Activated CD8-positive, alpha-beta memory T cell treated with anti-CD3 and anti-CD28 coated beads, Interleukin-2, amount 10 ng/mL, durations not matched to agents 7 days and 5 days (primary cell): ENCODE measurements at regions of chr15 and their contacts with region 1.

Region 1: DNA sequence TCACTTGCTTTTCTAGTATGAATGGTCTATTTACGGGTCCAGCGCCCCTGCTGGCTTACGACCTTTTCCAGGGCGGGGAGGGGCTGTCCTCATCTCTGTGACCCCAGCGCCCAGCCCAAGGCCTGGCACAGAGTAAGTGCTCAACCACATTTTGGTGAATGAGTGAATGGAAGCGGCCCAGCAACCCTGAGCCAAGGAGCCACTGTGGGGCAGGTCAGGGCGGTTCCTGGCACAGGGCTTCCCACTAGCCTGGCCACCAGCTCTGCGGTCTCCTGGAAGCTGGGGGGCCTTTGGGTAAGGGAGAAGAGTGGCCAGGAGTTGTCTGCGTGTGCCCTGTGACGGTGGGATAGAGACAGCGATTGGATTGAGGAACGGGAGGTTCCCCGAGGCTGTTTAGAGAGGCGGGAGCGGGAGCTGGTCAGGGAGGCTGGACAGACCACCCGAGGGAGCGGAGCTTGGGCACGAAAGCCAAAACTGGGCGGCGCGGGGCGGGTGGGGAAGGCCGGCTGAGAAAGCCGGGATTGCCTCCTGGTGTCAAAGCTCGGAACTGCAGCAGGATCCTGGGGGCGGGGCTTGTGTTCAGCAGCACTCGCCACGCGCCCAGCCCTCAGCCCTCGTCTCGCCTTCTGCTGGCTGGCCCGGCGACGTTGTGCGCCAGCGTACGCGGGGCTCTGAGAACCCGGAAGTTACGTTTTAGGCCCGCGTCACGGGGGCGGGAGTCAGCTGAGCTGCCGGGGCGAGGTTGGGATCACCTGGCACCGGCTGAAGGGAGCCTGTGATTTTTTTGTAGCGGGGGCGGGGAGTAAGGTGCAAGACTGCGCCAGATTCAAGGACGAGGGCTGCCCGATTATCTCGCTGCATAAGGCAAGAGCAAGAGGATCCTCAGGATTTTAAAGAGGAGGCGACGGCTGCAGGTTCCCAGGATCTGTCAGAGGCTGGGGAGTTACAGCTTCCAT is at the start of gene VPS18:
- DNase-seq: peak; percentile 99
- ATAC-seq: peak; percentile 98
- H3K4me3 Mint-ChIP-seq: peak within 1 kb of the TSS; percentile 98
- H3K27ac Mint-ChIP-seq: peak within 1 kb of the TSS; percentile 94
- H3K4me1 Mint-ChIP-seq: peaks cover 32% of the 10 kb centered on the region
- H3K27me3 Mint-ChIP-seq: no peaks in the 10 kb centered on the region
- total RNA-seq, gene VPS18: 16.9 to 19.5 TPM

Region 2: GRCh38 chr15:40770147-40770721 is 123.8 kb before region 1 on chr15:
- CTCF ChIA-PET with region 1: no interaction called
- DNase-seq: no peak
- ATAC-seq: no peak
- H3K4me3 Mint-ChIP-seq: no peak overlapping the region
- H3K27ac Mint-ChIP-seq: peak overlapping the region; percentile 63
- H3K4me1 Mint-ChIP-seq: peaks cover 34% of the 10 kb centered on the region
- H3K27me3 Mint-ChIP-seq: no peaks in the 10 kb centered on the region

Region 3: DNA sequence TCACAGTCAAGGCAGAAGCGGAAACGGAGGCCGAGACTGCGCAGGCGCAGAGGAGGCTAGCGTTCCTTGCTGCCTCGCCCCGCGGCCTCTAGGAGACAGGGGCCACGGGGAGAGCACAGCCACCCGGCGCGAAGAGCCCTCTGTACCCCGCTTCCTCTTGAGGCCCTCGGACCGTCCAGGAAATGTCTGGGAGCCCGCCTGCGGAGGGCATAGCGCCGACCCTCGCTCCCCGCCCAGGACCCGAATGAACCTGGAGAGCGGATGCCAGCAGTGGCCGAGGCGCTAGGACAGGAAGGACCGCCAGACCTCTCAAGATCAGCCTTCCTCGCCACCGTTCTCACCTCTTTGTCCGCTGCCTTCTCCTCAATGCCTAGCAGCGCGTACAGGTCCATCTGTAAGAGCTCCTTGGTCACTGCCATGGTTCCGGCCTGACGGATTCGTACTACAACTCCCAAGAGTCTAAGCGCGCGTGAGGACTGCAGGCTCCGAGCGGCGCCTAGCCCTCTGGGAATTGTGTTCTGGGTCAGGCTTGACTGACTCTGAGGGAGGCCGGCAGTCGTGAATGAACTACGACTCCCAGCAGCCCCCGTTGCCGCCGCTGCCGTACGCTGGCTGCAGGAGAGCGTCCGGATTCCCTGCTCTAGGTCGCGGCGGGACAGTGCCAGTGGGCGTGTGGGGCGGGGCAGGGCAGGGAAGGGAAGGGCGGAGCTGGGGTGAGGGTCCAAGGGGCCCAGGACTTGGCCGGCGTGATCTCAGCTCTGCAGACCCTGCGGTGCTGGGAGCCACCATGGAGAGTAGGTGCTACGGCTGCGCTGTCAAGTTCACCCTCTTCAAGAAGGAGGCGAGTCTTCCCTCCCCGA is 86.8 kb before region 1 on chr15 and contains the starts of genes DNAJC17 and ZFYVE19:
- CTCF ChIA-PET with region 1: interaction called, 16 read pairs
- DNase-seq: peak; percentile 98
- ATAC-seq: peak; percentile 98
- H3K4me3 Mint-ChIP-seq: peak within 1 kb of the TSS; percentile 84
- H3K27ac Mint-ChIP-seq: peak within 1 kb of the TSS; percentile 93
- H3K4me1 Mint-ChIP-seq: peaks cover 26% of the 10 kb centered on the region
- H3K27me3 Mint-ChIP-seq: no peaks in the 10 kb centered on the region
- total RNA-seq, gene DNAJC17: 45.6 to 51.2 TPM
- total RNA-seq, gene ZFYVE19: 28.2 TPM

Region 4: DNA sequence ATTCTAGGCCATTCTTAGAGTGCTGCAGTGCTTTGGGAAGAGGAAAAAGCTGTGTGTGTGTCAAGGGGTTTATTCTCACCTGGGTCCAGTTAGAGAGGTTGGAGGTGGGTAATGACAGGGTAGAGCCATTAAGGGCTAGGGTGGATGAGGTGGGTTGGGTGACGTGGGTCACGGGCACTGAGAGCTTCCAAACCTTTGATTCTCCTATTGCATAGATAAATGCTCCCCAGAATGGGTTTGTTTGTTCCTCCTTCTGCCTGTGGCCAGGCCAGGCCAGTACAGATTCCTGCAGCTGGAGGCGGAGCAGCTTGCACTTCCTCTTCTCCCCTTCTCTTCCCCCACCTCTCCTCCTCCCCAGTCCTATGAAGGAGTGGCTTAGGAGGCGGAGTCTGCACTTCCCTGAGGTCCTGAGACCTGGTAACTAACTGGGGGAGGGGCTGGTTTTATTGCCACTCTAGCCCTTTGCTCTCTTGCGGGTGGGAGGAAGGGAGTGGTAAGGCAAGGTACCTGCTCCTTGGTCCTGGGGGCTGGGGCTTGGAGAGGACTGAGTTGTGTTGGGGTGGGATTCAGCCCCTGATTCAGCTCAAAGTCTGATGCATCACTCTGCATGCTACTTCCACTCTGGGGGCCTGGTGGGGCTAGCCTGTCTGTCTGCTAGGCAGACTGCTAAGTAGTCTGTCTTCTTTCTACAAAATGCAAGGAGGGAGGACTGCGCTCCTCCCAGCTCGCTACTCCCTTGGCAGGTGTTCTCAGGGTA is 46.6 kb before region 1 on chr15:
- CTCF ChIA-PET with region 1: interaction called, 11 read pairs
- DNase-seq: no peak
- ATAC-seq: no peak
- H3K4me3 Mint-ChIP-seq: no peak overlapping the region
- H3K27ac Mint-ChIP-seq: no peak overlapping the region
- H3K4me1 Mint-ChIP-seq: peaks cover 25% of the 10 kb centered on the region
- H3K27me3 Mint-ChIP-seq: peaks cover 16% of the 10 kb centered on the region

Region 5: DNA sequence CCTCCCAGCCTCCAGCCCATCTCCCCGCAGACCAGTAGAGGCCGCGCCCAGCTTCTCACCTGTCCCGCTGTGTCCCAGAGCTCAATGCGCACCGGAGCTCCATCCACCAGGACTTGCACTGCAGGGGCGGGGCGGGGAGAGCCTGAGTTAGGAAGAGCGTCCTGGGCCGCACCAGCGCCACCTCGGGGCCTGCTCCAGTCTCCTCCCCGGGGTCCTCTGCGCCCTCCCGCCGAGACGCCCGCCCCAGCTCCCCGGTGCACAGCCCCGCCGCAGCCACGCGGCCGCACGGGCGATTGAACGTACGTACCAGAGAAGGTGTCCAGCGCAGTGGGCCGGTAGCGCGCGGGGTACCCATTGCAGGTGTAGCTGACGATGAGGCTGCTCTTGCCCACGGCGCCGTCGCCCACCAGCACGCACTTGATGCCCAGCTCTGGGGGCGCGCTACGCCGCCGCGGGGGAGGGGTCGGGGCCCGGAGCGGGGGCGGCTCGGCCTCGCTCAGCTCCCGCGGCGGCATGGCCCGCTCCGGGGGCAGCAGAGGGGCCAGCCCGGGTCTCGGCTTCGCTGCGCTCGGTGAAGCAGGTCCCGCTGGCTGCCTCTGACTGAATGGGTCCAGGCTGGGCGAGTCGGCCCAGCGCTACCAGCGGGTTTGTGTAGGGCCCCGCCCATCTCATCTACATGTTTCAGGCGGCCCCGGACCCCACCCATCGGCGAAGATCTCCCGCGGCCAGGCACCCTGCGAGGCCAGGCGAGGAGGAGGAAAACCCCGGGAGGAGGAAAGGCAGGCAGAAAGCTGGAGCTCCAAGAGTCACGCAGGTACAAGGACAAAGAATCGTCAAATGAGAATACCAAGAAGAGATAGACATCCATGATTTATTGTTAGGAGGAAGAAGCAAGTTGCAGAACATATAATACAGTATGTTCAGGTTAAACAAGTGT is 20.1 kb before region 1 on chr15 and contains the start of gene RHOV:
- CTCF ChIA-PET with region 1: interaction called, 64 read pairs
- DNase-seq: peak; percentile 56
- ATAC-seq: peak; percentile 84
- H3K4me3 Mint-ChIP-seq: peak within 1 kb of the TSS; percentile 57
- H3K27ac Mint-ChIP-seq: no peak within 1 kb of the TSS
- H3K4me1 Mint-ChIP-seq: peaks cover 11% of the 10 kb centered on the region
- H3K27me3 Mint-ChIP-seq: peaks cover 18% of the 10 kb centered on the region
- total RNA-seq, gene RHOV: not detected

Region 6: DNA sequence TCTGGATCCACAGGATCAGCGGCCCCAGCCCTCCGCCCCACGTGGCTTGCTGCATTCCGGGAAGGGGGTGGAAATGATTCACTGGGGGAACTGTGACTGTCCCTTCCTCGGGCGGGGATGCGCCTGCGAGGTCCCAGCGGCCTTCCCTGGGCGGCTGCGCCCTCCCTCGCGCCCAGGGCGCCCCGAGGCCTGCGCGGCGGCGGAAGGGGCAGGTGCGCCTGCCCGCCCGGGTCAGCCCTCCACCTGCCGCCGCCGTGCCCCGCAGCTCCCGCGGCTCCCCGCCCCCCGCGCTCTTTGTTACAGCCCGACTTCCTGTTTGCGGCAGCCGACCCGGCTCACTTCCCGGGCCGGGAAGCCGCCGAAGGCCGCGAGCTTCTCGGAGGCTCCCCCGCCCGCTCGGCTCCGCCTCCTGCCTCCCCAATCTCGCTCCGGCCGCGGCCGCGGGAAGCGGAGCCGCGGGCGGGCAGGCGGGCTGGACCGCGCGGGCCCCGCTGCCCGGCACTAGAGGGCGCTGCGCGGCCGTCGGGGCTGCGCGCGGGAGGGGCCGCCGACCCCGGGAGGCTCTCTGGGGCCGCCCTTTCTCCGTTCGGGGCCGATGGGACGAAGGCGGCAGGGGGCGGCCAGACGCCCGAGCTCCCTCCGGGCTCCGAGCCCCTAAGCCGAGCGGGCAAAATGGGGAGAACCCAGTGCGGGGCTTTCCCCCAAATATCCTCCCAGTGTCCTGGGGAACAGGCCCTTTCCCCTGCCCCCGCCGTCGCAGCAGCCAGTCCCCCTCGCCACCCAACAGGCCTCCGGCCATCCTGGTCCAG is 47.7 kb after region 1 on chr15:
- CTCF ChIA-PET with region 1: interaction called, 16 read pairs
- DNase-seq: peak; percentile 76
- ATAC-seq: peak; percentile 90
- H3K4me3 Mint-ChIP-seq: peak overlapping the region; percentile 74
- H3K27ac Mint-ChIP-seq: no peak overlapping the region
- H3K4me1 Mint-ChIP-seq: peaks cover 32% of the 10 kb centered on the region
- H3K27me3 Mint-ChIP-seq: peaks cover 4% of the 10 kb centered on the region

Region 7: DNA sequence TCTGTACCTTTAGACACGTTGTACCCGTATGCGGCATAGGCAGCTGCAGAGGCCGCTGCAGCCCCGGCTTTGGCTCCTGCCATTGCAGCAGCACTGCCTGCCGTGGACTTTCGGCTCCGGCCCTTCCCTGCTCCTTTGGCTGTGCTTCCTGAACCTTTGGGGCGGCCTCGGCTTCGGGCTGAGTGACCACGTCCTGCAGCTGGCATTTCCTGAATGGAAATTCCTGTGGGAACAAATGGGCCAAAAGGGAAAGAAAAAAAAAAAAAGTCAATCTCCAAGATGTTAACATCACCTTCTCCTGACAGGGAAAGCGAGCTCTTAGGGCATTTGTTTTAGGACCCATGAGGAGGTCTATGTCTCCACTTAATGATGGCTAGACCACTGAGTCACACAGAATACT is 88.8 kb after region 1 on chr15:
- CTCF ChIA-PET with region 1: no interaction called
- DNase-seq: no peak
- ATAC-seq: no peak
- H3K4me3 Mint-ChIP-seq: no peak overlapping the region
- H3K27ac Mint-ChIP-seq: no peak overlapping the region
- H3K4me1 Mint-ChIP-seq: peaks cover 3% of the 10 kb centered on the region
- H3K27me3 Mint-ChIP-seq: no peaks in the 10 kb centered on the region

Region 8: DNA sequence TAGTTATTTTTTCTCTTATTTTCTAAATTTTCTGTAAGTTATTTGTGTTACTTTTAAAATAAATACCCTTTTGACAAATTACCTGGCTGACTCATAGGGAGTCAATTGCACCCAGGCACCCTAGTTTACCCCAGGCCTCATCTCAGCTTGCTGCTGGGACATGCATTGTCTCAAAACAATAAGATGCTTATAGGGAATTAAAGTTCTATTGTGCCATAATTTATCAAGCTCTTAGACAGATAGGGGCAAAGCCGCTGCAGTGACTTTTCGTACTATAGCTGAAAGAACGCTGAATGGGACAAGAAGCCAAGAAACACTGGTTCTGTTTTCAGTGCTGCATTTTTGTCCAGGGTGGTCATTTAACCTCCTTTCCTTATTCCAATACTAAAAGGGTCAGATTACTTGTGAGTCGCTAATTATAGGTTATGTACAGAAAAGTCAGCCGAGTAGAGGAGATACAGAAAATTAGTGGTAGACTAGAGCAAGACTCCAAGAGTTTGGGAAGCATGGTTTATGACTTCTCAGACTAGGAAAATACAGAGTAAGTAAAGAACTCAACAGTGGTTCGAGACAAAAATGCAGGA is 286.3 kb after region 1 on chr15:
- CTCF ChIA-PET with region 1: interaction called, 17 read pairs
- DNase-seq: no peak
- ATAC-seq: no peak
- H3K4me3 Mint-ChIP-seq: no peak overlapping the region
- H3K27ac Mint-ChIP-seq: no peak overlapping the region
- H3K4me1 Mint-ChIP-seq: peaks cover 1% of the 10 kb centered on the region
- H3K27me3 Mint-ChIP-seq: peaks cover 13% of the 10 kb centered on the region